GM23248 (cell line): ENCODE measurements at regions of chr19 and their contacts with region 1.

Region 1: GRCh38 chr19:46076951-46077816 is 36.4 kb upstream of the IGFL4 start:
- DNase-seq: peak; percentile 90
- H3K4me3 ChIP-seq: 0 out of 2 replicates have a peak overlapping the region, but pooled peaks have one; percentile 16
- H3K27ac ChIP-seq: no peak overlapping the region
- H3K4me1 ChIP-seq: peaks cover 13% of the 10 kb centered on the region
- H3K27me3 ChIP-seq: peaks cover 56% of the 10 kb centered on the region

Region 2: GRCh38 chr19:46025835-46026234 is 51.3 kb before region 1 on chr19:
- in situ Hi-C with region 1: loop called (anchors 5 kb)
- DNase-seq: no peak
- H3K4me3 ChIP-seq: no peak overlapping the region
- H3K27ac ChIP-seq: no peak overlapping the region
- H3K4me1 ChIP-seq: no peaks in the 10 kb centered on the region
- H3K27me3 ChIP-seq: peaks cover 16% of the 10 kb centered on the region; the same call in 1 of the 2 replicates

Region 3: GRCh38 chr19:46186101-46187100 is 109.2 kb after region 1 on chr19:
- in situ Hi-C with region 1: loop called (anchors 5 kb)
- DNase-seq: no peak
- H3K4me3 ChIP-seq: no peak overlapping the region
- H3K27ac ChIP-seq: no peak overlapping the region
- H3K4me1 ChIP-seq: peaks cover 22% of the 10 kb centered on the region
- H3K27me3 ChIP-seq: peaks cover 8% of the 10 kb centered on the region

Region 4: GRCh38 chr19:46265217-46265828 is 188.1 kb after region 1 on chr19:
- in situ Hi-C with region 1: loop called (anchors 5 kb)
- DNase-seq: peak; percentile 84
- H3K4me3 ChIP-seq: no peak overlapping the region
- H3K27ac ChIP-seq: no peak overlapping the region
- H3K4me1 ChIP-seq: no peaks in the 10 kb centered on the region
- H3K27me3 ChIP-seq: peaks cover 21% of the 10 kb centered on the region